T-cell (primary cell): ENCODE measurements at regions of chr7 and their contacts with region 1.

Region 1: DNA sequence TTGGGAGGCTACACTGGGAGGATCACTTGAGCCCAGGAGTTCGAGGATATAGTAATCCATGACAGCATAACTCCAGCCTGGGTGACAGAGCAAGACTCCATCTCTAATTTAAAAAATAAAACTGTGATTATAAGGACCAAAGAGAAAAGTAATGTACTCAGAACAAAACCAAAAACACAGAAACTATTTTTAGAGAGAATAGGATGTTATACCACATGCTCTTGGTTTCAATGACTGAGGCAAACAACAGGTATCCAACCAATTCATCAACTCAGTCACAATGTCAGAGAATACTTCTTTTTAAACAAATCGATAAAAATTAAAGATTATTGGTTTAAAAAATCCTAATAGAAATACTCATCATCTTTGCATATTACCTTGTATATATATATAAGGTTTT is 186.7 kb downstream of the TPK1 start:
- DNase-seq: no peak
- ATAC-seq: no peak
- H3K4me3 ChIP-seq: no peak overlapping the region
- H3K4me3 Mint-ChIP-seq: no peak overlapping the region
- H3K27ac ChIP-seq: no peak overlapping the region
- H3K27ac Mint-ChIP-seq: no peak overlapping the region
- H3K4me1 ChIP-seq: no peaks in the 10 kb centered on the region
- H3K4me1 Mint-ChIP-seq: peaks cover 0 to 6% (median 0%) of the 10 kb centered on the region in 3 donors
- H3K27me3 ChIP-seq: no peaks in the 10 kb centered on the region
- H3K27me3 Mint-ChIP-seq: no peaks in the 10 kb centered on the region

Region 2: DNA sequence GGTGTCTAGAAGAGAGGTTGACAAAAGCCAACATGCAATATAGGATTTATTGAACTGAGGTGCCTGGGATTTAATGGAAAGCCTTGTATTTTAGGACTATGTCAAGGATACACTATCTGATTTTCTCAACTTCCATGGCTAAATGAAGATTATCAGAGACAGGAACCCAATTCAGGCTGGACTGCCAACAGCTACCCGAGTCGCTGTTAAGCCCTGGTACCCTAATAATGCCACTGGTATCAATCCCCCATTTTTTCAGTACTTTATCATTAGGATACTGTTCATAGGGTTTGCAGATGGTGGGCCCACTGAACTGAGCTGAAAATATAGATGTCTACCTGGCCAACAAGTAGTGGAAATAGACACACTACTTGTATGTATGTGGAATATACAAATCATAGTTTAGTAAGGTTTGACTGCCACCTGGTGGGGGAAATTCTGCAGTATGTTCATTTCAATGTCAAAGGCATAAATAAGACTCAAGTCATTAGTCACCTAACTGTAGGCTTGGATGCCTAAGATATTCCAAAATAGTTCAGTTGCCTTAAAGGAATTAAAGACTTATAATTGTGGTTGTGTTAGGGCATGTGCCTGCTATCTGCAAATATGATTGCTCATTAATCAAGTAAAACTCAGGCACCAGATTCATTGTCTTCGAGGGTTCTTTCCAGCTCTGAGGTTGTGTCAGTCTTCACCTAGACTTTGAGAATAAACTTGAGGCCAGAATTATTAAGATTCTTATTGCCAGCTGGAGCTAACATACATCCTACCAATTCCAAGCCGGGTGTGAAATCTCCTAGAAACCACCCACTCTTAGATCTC is 211.5 kb before region 1 on chr7:
- CTCF ChIA-PET with region 1: no interaction called
- POLR2A ChIA-PET with region 1: interaction called in 1 of 2 experiments, 12 read pairs
- DNase-seq: peak in 29 of 35 experiments; percentile 3 to 64 (median 25)
- ATAC-seq: no peak
- H3K4me3 ChIP-seq: no peak overlapping the region
- H3K4me3 Mint-ChIP-seq: no peak overlapping the region
- H3K27ac ChIP-seq: no peak overlapping the region
- H3K27ac Mint-ChIP-seq: no peak overlapping the region
- H3K4me1 ChIP-seq: no peaks in the 10 kb centered on the region
- H3K4me1 Mint-ChIP-seq: no peaks in the 10 kb centered on the region
- H3K27me3 ChIP-seq: no peaks in the 10 kb centered on the region
- H3K27me3 Mint-ChIP-seq: peaks cover 2 to 3% of the 10 kb centered on the region in 2 donors

Region 3: DNA sequence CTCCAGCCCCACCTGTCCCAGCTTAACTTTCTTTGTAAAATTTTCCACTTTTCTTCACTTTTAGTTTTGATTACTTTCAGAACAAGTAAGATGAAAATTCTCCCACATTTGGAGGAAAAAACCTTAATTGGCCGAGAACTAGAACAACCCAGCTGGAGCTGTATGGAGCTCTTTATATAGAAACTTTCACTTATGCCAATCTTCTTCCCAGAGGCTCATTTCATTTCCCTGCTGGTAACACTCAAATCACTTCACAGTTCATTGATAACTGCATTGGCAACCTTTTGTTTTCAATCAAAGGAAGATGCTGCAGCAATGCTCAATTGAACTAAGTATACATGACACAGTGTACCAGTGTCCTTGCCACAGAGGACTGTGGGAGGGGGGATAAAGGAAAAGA is 69.4 kb before region 1 on chr7:
- CTCF ChIA-PET with region 1: no interaction called
- POLR2A ChIA-PET with region 1: no interaction called
- DNase-seq: no peak
- ATAC-seq: no peak
- H3K4me3 ChIP-seq: no peak overlapping the region
- H3K4me3 Mint-ChIP-seq: no peak overlapping the region
- H3K27ac ChIP-seq: no peak overlapping the region
- H3K27ac Mint-ChIP-seq: no peak overlapping the region
- H3K4me1 ChIP-seq: no peaks in the 10 kb centered on the region
- H3K4me1 Mint-ChIP-seq: peaks cover 0 to 4% (median 0%) of the 10 kb centered on the region in 3 donors
- H3K27me3 ChIP-seq: no peaks in the 10 kb centered on the region
- H3K27me3 Mint-ChIP-seq: no peaks in the 10 kb centered on the region